ENCODE measurements at regions of chr4 and their contacts with region 1.

Region 1: GRCh38 chr4:176340871-176341685 is 21.3 kb downstream of the SPCS3 start:
- DNase-seq: no peak
- ATAC-seq: peak; percentile 54

Region 2: DNA sequence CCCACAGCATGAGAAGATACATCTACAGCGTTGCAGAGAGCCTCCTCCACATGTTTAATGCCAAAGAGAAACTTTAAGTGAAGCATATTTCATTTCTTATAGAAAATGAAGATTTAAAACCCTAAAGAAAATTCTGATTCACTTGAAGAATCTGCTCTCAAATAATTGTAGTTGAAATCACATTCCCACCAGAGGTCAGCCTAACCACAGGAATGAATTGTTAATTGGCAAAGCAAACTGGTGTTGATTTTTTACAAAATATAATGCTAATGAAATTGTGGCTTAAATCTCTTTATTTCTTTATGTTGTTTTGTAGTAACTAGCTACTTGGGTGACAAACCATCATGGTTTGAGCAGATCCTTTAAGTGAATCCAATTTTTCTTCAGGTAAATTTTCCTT is 306.6 kb before region 1 on chr4:
- intact Hi-C with region 1: loop called in 1 of 2 experiments (anchors 5 kb)
- DNase-seq: no peak
- ATAC-seq: no peak

Region 3: DNA sequence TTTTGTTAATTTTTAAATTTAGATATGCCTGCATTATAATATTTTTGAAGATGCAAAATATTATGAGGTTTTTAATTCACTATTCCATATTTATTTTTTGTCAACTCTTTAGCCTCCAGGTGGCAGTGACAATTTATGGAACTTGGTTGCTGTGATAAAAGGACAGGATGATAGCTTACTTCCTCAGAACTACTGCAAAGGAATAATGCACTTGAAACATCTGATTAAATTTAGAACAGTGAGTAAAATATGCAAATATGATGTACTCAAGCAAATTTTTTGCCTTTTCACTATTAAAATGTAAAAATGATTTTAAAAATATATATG is 190.8 kb before region 1 on chr4:
- intact Hi-C with region 1: loop called in 1 of 2 experiments (anchors 10 kb)
- DNase-seq: no peak
- ATAC-seq: peak; percentile 43